Naive thymus-derived CD4-positive, alpha-beta T cell (primary cell): ENCODE measurements at regions of chr13 and their contacts with region 1.

Region 1: DNA sequence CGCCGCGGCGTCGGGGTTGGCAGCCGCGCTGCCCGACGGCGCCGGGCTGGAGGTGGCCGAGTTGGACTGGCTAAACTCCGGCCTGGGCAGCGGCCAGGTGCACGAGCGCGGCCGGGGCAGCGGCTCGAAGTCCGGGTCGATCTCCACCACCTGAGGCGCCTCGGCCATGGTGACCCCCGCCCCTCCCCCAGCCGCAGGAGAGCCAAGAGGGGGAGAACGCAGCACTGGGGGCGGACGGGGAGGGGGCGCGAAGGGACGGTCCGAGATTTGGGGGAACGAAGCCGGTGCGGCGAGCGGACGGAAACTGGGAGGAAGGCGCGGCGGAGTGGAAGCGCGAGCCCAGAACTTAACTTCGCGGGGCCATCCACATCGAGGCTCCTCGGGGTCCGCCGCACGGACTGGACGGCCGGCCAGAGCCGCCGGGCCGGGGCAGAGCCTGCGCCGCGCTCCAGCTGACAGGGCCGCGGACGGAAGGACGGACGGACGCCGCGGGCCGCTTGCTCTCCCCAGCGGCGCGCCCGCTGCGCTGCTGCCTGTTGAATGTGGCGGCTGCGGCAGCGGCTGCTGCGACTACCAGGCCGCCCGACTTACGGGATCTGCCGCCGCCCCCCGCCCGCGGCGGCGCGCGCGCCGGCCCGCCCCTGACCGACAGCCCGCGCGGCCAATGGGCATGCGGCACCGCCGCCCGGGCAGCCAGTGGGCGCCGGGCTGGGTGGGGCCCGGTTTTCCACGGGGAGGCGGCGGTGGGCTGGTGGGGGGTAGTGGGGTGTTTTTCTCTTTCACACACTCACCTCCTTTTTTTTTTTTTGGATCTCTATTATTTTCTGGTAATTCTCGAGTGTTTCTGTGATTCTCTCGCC is at the start of gene FOXO1:
- DNase-seq: peak; percentile 89 to 98 (median 94)
- ATAC-seq: peak; percentile 87
- H3K4me3 ChIP-seq: peak within 1 kb of the TSS; percentile 84
- H3K4me3 Mint-ChIP-seq: peak within 1 kb of the TSS; percentile 90 to 98 (median 94)
- H3K27ac ChIP-seq: peak within 1 kb of the TSS; percentile 93
- H3K27ac Mint-ChIP-seq: peak within 1 kb of the TSS; percentile 91 to 99 (median 92)
- H3K4me1 ChIP-seq: peaks cover 12 to 19% of the 10 kb centered on the region in 2 donors
- H3K4me1 Mint-ChIP-seq: peaks cover 28 to 51% (median 47%) of the 10 kb centered on the region in 7 donors
- H3K27me3 ChIP-seq: no peaks in the 10 kb centered on the region
- H3K27me3 Mint-ChIP-seq: no peaks in the 10 kb centered on the region
- total RNA-seq, gene FOXO1: 36.4 to 97.6 (median 93.7) TPM

Region 2: DNA sequence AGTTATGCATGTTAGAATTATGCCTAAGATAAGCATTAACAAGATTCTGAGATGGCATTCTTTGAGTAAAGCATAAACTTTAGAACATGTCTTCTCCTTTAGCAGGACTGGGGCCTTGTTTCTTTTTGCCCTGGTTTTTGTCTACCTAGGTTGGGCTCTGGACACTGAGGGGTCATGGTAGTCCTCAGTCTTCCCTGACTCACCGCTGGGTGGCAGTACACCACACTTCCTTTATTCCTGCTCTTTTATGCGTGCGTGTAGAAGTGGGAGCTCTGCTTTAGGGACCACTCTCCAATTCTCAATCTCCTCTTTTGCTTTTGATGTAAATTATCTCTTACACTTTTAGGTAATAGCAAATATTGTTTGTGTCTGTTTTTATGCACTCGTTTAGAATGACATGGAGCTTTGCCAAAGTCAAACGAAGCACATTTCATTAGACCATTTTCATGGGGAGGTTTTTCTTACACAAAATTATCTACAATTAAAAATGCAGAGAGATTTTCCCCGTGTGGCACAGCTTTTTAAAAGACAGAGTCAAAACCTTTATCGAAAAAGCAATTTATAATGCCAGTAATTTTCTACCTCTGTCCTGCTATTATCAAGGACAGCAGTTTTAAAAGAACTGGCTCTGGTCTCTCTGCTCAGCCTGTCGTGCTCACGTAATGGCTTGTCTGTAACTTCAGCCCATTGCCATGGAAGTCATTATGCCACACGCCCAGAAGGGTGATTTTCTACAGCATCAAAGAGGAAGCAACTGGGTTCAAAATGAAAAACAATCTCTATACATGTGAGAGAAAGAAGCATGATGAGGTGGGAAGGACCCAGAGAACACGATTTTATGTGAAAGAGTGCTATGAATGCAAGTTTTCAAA is 596.9 kb before region 1 on chr13:
- CTCF ChIA-PET with region 1: interaction called, 10 read pairs
- POLR2A ChIA-PET with region 1: interaction called, 4 read pairs
- intact Hi-C with region 1: loop called (anchors 1 kb)
- DNase-seq: peak; percentile 46 to 76 (median 64)
- ATAC-seq: peak; percentile 96
- H3K4me3 ChIP-seq: no peak overlapping the region
- H3K4me3 Mint-ChIP-seq: peak overlapping the region; percentile 34 to 86 (median 68)
- H3K27ac ChIP-seq: no peak overlapping the region
- H3K27ac Mint-ChIP-seq: peak overlapping the region; percentile 22 to 88 (median 64)
- H3K4me1 ChIP-seq: peaks cover 0 to 22% of the 10 kb centered on the region in 2 donors
- H3K4me1 Mint-ChIP-seq: peaks cover 6 to 44% (median 29%) of the 10 kb centered on the region in 7 donors
- H3K27me3 ChIP-seq: no peaks in the 10 kb centered on the region
- H3K27me3 Mint-ChIP-seq: no peaks in the 10 kb centered on the region

Region 3: GRCh38 chr13:40440990-40441820 is 225.1 kb before region 1 on chr13:
- CTCF ChIA-PET with region 1: interaction called, 5 read pairs
- POLR2A ChIA-PET with region 1: interaction called, 4 read pairs
- intact Hi-C with region 1: loop called (anchors 2 to 5 kb)
- DNase-seq: no peak
- ATAC-seq: no peak
- H3K4me3 ChIP-seq: no peak overlapping the region
- H3K4me3 Mint-ChIP-seq: no peak overlapping the region
- H3K27ac ChIP-seq: no peak overlapping the region
- H3K27ac Mint-ChIP-seq: no peak overlapping the region
- H3K4me1 ChIP-seq: peaks cover 4 to 24% of the 10 kb centered on the region in 2 donors
- H3K4me1 Mint-ChIP-seq: peaks cover 16 to 33% (median 28%) of the 10 kb centered on the region in 7 donors
- H3K27me3 ChIP-seq: no peaks in the 10 kb centered on the region
- H3K27me3 Mint-ChIP-seq: no peaks in the 10 kb centered on the region

Region 4: DNA sequence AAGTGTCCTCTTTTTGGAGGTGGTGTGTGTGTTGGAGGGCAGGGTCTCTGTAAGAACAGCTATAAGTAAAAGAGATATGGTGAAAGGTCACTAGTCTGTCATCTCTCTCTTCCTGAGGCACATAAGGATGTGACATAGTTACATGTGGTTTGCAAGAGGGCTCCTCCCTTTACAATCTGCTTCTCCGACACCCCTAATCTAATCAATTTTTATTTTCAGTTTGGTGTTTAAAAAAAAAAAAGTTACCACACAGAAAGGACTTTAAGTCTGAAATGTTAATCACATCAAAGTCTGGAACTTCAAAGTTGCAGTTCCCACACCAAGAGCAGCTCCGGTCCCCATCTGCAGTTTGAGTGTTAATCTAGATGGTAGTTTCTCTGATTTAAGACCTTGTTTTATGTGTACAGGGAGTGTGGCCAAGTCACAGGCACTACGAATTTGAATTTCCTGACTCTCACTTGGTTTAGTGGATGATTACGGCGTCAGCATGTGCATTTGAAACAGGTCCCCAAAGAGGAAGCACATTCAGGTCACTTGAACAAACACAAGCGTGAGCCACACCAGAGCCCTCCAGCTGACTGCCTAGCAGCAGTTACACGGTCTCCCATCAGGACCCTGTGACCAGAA is 53.0 kb before region 1 on chr13:
- CTCF ChIA-PET with region 1: interaction called, 5 read pairs
- POLR2A ChIA-PET with region 1: interaction called, 9 read pairs
- intact Hi-C with region 1: loop called (anchors 1 to 5 kb)
- DNase-seq: peak in 8 of 9 donors; percentile 44 to 76 (median 64)
- ATAC-seq: peak; percentile 86
- H3K4me3 ChIP-seq: peak overlapping the region; percentile 26
- H3K4me3 Mint-ChIP-seq: peak overlapping the region; percentile 72 to 88 (median 82)
- H3K27ac ChIP-seq: peak overlapping the region; percentile 72
- H3K27ac Mint-ChIP-seq: peak overlapping the region; percentile 76 to 98 (median 92)
- H3K4me1 ChIP-seq: peaks cover 64 to 83% of the 10 kb centered on the region in 2 donors
- H3K4me1 Mint-ChIP-seq: peaks cover 59 to 100% (median 95%) of the 10 kb centered on the region in 7 donors
- H3K27me3 ChIP-seq: no peaks in the 10 kb centered on the region
- H3K27me3 Mint-ChIP-seq: no peaks in the 10 kb centered on the region

Region 5: DNA sequence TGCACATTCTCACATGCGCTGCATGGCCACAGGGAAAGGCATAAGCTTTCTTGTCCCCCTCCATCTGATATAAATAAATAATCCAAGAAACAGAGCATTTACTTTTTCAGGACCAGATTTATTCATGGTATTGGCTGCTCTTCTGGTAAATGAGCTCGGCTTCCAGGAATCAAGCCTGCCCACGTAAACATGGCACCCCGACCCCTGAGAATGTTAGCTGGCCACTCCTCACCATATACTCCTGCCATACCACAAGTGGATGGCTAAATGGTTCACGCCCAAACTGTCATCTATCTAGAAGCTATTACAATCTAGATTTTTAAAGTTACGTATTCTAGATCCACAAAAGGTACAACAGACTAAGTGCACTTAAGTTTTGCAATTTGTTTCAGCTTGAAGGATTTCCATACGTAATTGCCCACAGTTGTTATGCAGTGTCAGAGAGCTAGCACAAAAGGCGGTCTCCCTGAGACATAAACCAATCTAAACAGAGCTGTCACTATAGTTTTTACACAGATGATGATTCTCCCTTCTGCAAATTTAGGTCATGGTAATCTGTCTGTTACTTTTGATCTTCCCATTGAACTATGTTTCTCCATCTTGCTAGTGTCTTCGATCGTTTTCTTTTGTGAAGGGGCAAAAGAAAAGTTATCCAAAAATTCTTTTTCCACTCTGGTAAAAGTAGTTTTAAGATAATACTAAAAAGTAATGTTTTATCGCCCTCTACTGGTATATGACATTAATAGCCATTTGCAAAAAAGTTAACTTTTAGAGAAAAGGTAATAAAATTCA is 16.4 kb after region 1 on chr13:
- CTCF ChIA-PET with region 1: interaction called, 10 read pairs
- POLR2A ChIA-PET with region 1: interaction called, 8 read pairs
- intact Hi-C with region 1: loop called in 1 of 2 experiments (anchors 1 kb)
- DNase-seq: peak in 6 of 9 donors; percentile 32 to 60 (median 52)
- ATAC-seq: peak; percentile 52
- H3K4me3 ChIP-seq: no peak overlapping the region
- H3K4me3 Mint-ChIP-seq: peak overlapping the region in 5 of 10 donors; percentile 2 to 45 (median 18)
- H3K27ac ChIP-seq: no peak overlapping the region
- H3K27ac Mint-ChIP-seq: peak overlapping the region in 2 of 9 donors; percentile 37 to 45
- H3K4me1 ChIP-seq: peaks cover 0 to 6% of the 10 kb centered on the region in 2 donors
- H3K4me1 Mint-ChIP-seq: peaks cover 8 to 17% (median 14%) of the 10 kb centered on the region in 7 donors
- H3K27me3 ChIP-seq: no peaks in the 10 kb centered on the region
- H3K27me3 Mint-ChIP-seq: no peaks in the 10 kb centered on the region

Region 6: DNA sequence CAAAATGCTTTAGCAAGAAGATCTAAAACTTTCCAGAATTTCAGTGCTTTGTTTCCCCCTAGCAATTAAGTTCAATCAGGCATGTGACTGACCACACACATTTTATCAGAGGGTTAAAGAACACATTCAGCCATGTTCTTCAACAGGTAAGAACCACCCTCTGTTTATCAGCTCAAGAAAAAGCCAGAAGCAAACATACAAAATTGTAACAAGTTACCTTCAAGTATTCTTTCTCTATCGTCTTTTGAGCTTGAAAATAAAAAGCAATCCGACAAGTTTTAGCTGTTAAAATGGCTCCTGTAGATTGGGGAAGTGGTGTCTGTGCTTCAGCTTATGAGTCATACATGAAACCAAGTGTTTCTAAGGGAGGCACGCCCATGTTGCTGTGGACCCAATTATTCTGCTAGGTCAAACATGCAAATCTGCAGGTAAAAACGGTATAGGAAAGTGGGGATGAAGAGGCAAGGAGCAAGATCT is 352.8 kb after region 1 on chr13 and contains the start of gene ELF1:
- CTCF ChIA-PET with region 1: no interaction called
- POLR2A ChIA-PET with region 1: no interaction called
- intact Hi-C with region 1: loop called (anchors 10 kb)
- DNase-seq: peak in 8 of 9 donors; percentile 35 to 83 (median 75)
- ATAC-seq: peak; percentile 93
- H3K4me3 ChIP-seq: peak within 1 kb of the TSS; percentile 76
- H3K4me3 Mint-ChIP-seq: peak within 1 kb of the TSS; percentile 79 to 94 (median 90)
- H3K27ac ChIP-seq: peak within 1 kb of the TSS; percentile 93
- H3K27ac Mint-ChIP-seq: peak within 1 kb of the TSS; percentile 90 to 98 (median 96)
- H3K4me1 ChIP-seq: peaks cover 14 to 22% of the 10 kb centered on the region in 2 donors
- H3K4me1 Mint-ChIP-seq: peaks cover 29 to 61% (median 50%) of the 10 kb centered on the region in 7 donors
- H3K27me3 ChIP-seq: no peaks in the 10 kb centered on the region
- H3K27me3 Mint-ChIP-seq: no peaks in the 10 kb centered on the region
- total RNA-seq, gene ELF1: 117 to 193 (median 180) TPM